ENCODE measurements at regions of chr16 and their contacts with region 1.

Region 1: DNA sequence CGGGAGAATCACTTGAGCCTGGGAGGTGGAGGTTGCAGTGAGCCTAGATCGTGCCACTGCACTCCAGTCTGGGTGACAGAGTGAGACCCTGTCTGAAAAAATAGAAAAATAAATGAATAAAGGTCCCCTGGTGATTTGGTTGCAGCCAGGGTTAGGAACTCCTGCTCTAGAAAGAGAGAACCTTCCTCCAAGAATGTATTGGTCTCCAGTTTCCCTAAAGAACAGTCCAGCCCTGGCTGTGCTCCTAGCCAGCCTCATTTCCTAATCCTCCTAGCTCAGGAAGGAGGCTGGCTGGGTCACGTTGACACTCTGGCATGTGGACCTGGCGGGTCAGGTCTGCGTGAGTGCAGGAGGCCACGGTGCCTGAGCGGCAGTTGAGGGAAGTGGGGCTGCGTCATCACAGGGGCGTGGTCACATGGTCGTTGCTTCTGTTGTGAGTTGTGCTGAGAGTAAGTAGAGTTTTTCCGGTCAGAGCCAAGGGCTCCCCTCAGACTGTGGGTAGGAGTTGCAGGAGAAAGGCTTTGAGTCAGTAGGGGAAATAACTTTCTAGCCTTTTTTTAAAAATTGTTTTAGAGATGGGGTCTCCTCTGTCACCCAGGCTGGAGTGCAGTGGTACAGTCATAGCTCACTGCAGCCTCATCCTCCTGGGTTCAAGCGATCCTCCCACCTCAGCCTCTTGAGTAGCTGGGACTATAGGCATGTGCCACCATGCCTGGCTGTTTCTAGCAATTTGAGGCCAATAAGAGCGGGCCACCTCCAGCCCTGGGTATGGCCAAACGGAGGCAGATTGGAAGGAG is 193.9 kb upstream of the CIBAR2 start:
- DNase-seq: peak; percentile 31
- H3K4me3 ChIP-seq: no peak overlapping the region
- H3K27ac ChIP-seq: peak overlapping the region in 2 of 4 donors; percentile 7 to 42
- H3K4me1 ChIP-seq: peaks cover 10 to 81% (median 30%) of the 10 kb centered on the region in 3 donors
- H3K27me3 ChIP-seq: peaks cover 0 to 53% (median 0%) of the 10 kb centered on the region in 4 donors
- CTCF ChIP-seq: peak in 1 of 6 experiments; percentile 5
- POLR2A ChIP-seq: no peak

Region 2: GRCh38 chr16:85416228-85417119 is 110.3 kb after region 1 on chr16:
- intact Hi-C with region 1: loop called (anchors 10 kb)
- DNase-seq: no peak
- H3K4me3 ChIP-seq: peak overlapping the region in 2 of 4 donors; percentile 7 to 13
- H3K27ac ChIP-seq: no peak overlapping the region
- H3K4me1 ChIP-seq: peaks cover 0 to 31% (median 0%) of the 10 kb centered on the region in 3 donors
- H3K27me3 ChIP-seq: peaks cover 0 to 2% (median 0%) of the 10 kb centered on the region in 4 donors
- CTCF ChIP-seq: peak; percentile 34 to 86 (median 75)
- POLR2A ChIP-seq: no peak